ENCODE measurements at regions of chr20 and their contacts with region 1.

Region 1: DNA sequence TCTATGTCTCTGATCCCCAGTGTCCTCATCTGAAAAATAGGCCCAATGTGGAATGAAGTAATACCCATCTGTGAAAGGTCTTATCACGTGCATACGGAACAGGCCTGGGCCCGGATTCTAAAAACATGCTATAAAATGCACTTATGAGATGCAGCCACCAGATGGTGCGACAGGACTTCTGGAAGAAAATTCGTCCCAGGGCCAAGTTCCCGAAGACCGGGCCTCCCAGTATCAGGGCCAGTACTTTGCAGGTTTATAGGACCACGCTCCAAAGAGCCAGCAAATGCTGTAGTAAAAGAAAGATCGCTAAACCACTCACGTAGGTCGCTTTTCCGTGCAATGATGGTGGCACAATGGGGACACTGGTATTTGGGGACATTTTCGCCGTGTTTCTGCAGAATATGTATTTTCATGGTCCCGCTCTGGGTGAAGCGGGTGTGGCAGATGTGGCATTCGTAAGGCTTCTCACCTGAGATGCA is 10.6 kb downstream of the CTCFL start:
- DNase-seq: peak; percentile 73
- ATAC-seq: peak; percentile 82 to 87

Region 2: GRCh38 chr20:57590485-57591288 is 76.4 kb after region 1 on chr20:
- intact Hi-C with region 1: loop called (anchors 1 to 2 kb)
- DNase-seq: no peak
- ATAC-seq: no peak

Region 3: GRCh38 chr20:58209652-58210397 is 695.5 kb after region 1 on chr20:
- intact Hi-C with region 1: loop called (anchors 2 to 5 kb)
- DNase-seq: peak; percentile 87
- ATAC-seq: peak; percentile 87 to 91

Measured in left cardiac atrium (tissue), 4 donors.